ENCODE measurements at regions of chr2 and their contacts with region 1.

Region 1: GRCh38 chr2:17830053-17831034 is 14.1 kb downstream of the MSGN1 start:
- DNase-seq: peak; percentile 72 to 84 (median 79)
- ATAC-seq: peak; percentile 84 to 98 (median 96)
- H3K4me3 ChIP-seq: peak overlapping the region in 10 of 12 donors; percentile 4 to 40 (median 24)
- H3K27ac ChIP-seq: no peak overlapping the region
- H3K4me1 ChIP-seq: peaks cover 0 to 12% (median 5%) of the 10 kb centered on the region in 12 donors
- H3K27me3 ChIP-seq: peaks cover 0 to 16% (median 0%) of the 10 kb centered on the region in 9 donors
- CTCF ChIP-seq: peak; percentile 84 to 97 (median 92)
- POLR2A ChIP-seq: no peak

Region 2: GRCh38 chr2:17753803-17754663 is 76.3 kb before region 1 on chr2 and contains the starts of genes GEN1 and SMC6:
- intact Hi-C with region 1: loop called in 7 of 10 experiments (anchors 1 to 10 kb)
- DNase-seq: peak; percentile 90 to 96 (median 92)
- ATAC-seq: peak; percentile 97 to 98 (median 98)
- H3K4me3 ChIP-seq: peak within 1 kb of the TSS; percentile 71 to 100 (median 94)
- H3K27ac ChIP-seq: peak within 1 kb of the TSS; percentile 85 to 99 (median 98)
- H3K4me1 ChIP-seq: peaks cover 0 to 61% (median 29%) of the 10 kb centered on the region in 12 donors
- H3K27me3 ChIP-seq: no peaks in the 10 kb centered on the region
- CTCF ChIP-seq: no peak
- POLR2A ChIP-seq: peak in 1 of 2 donors; percentile 4
- total RNA-seq, gene GEN1: 2.4 to 8.8 (median 3.1) TPM
- total RNA-seq, gene SMC6: 10.1 to 14.7 (median 12.7) TPM

Region 3: GRCh38 chr2:17771956-17772355 is 58.4 kb before region 1 on chr2:
- intact Hi-C with region 1: loop called in 2 of 10 experiments (anchors 5 to 10 kb)
- DNase-seq: no peak
- ATAC-seq: peak in 2 of 4 donors; percentile 53 to 75
- H3K4me3 ChIP-seq: no peak overlapping the region
- H3K27ac ChIP-seq: no peak overlapping the region
- H3K4me1 ChIP-seq: peaks cover 0 to 18% (median 0%) of the 10 kb centered on the region in 12 donors
- H3K27me3 ChIP-seq: no peaks in the 10 kb centered on the region
- CTCF ChIP-seq: no peak
- POLR2A ChIP-seq: no peak

Measured in heart left ventricle (tissue), 16 donors.